Activated CD4-positive, alpha-beta memory T cell treated with anti-CD3 and anti-CD28 coated beads for 36 hours (primary cell): ENCODE measurements at regions of chr7 and their contacts with region 1.

Region 1: GRCh38 chr7:1137510-1138167 is 22.4 kb downstream of the ZFAND2A start:
- DNase-seq: no peak
- H3K4me3 Mint-ChIP-seq: peak overlapping the region; percentile 83
- H3K27ac Mint-ChIP-seq: peak overlapping the region; percentile 79
- H3K4me1 Mint-ChIP-seq: peaks cover 19% of the 10 kb centered on the region
- H3K27me3 Mint-ChIP-seq: no peaks in the 10 kb centered on the region

Region 2: GRCh38 chr7:1028031-1028770 is 109.4 kb before region 1 on chr7:
- CTCF ChIA-PET with region 1: no interaction called
- POLR2A ChIA-PET with region 1: no interaction called
- intact Hi-C with region 1: loop called (anchors 2 kb)
- DNase-seq: peak; percentile 92
- H3K4me3 Mint-ChIP-seq: peak overlapping the region; percentile 66
- H3K27ac Mint-ChIP-seq: peak overlapping the region; percentile 83
- H3K4me1 Mint-ChIP-seq: peaks cover 37% of the 10 kb centered on the region
- H3K27me3 Mint-ChIP-seq: no peaks in the 10 kb centered on the region

Region 3: DNA sequence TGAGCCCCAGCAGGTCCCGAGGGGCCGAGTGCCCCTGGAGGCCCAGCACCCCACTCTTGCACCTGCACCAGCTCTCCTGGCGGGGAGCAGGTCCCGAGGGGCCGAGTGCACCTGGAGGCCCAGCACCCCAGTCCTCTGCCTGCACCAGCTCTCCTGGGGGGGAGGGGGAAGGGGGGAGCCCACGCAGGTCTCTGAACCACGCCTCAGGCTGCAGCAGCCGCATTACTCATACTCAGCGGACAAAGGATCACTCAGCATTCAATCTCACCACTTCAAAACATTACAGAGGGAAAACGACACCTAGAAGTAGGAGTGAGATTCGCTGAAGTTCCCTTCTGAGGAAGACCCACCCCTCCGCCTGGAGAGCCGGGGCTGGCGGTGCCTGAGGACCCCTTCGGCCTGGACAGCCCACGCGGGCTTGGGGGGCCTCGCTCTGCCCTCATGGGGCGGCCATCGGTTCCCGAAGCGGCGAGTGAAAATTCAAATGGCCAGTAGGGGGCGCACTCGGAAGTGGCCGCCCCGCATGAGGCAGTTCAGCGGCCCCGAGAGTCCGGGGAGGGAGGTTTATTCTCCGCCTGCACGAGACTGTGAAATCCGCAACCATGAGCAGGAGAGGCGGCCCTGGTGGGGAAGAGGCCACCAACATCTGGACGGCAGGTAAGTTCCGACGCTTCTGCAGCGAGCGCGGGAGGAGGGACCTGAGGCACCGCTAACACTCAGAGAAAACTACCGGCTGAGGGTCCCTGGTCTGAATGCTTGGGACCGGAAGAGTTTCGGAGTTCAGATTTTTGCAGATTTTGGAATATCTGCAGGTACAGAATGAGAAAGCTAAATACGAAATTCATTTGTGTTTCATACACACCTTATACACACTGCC is 50.8 kb before region 1 on chr7:
- CTCF ChIA-PET with region 1: interaction called, 7 read pairs
- POLR2A ChIA-PET with region 1: no interaction called
- intact Hi-C with region 1: loop called (anchors 2 kb)
- DNase-seq: peak; percentile 81
- H3K4me3 Mint-ChIP-seq: peak overlapping the region; percentile 54
- H3K27ac Mint-ChIP-seq: no peak overlapping the region
- H3K4me1 Mint-ChIP-seq: peaks cover 14% of the 10 kb centered on the region
- H3K27me3 Mint-ChIP-seq: no peaks in the 10 kb centered on the region

Region 4: GRCh38 chr7:1159891-1160668 is 22.4 kb after region 1 on chr7 and contains the start of gene ZFAND2A:
- CTCF ChIA-PET with region 1: interaction called, 9 read pairs
- POLR2A ChIA-PET with region 1: interaction called, 10 read pairs
- intact Hi-C with region 1: loop called (anchors 1 kb)
- DNase-seq: peak; percentile 99
- H3K4me3 Mint-ChIP-seq: peak within 1 kb of the TSS; percentile 90
- H3K27ac Mint-ChIP-seq: peak within 1 kb of the TSS; percentile 87
- H3K4me1 Mint-ChIP-seq: peaks cover 25% of the 10 kb centered on the region
- H3K27me3 Mint-ChIP-seq: no peaks in the 10 kb centered on the region
- total RNA-seq, gene ZFAND2A: 24.1 to 27.5 TPM

Region 5: DNA sequence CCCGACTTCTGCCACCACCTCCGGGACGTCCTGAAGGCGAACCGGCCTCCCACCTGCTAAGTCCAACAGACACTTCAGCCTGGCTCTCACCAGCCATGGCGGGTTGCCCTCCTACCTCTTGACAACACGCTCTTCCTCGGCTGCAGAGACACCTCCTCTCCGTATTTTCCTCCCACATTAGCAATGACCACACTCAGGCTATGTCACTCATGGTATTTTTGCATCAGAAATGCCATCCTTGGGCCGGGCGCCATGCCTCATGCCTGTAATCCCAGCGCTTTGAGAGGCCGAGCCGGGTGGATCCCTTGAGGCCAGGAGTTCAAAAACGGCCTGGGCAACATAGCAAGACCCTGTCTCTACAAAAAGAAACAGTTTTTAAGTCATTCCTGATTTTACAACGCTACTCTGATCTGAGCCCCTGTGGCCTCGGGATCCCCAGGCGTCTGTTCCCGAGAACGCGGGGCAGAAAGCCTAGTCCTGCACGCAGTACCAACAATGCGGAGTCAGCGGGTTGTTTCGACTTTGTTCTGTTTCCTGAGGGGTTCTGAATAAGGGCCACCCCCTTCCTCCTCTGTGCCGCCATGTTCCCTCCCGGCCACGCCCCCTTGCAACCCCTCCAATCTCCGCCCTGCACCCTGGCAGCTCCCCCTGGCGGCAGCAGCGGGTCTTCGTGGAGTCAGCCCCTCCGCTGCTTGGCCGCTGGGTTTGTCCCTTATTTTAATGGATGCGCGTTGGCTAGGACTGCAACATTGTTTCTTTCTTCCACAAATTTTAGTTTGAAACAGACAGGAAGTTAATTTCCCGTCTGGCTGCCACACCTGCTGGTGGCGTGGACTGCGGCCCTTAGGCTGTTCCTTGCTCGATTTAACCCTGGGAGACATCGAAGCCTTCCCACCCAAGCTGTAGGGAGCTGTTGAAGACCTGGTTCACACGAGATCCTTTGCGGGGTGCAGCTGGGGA is 32.0 kb after region 1 on chr7:
- CTCF ChIA-PET with region 1: interaction called, 37 read pairs
- POLR2A ChIA-PET with region 1: no interaction called
- intact Hi-C with region 1: loop called (anchors 2 kb)
- DNase-seq: peak; percentile 98
- H3K4me3 Mint-ChIP-seq: peak overlapping the region; percentile 85
- H3K27ac Mint-ChIP-seq: peak overlapping the region; percentile 91
- H3K4me1 Mint-ChIP-seq: peaks cover 13% of the 10 kb centered on the region
- H3K27me3 Mint-ChIP-seq: no peaks in the 10 kb centered on the region

Region 6: DNA sequence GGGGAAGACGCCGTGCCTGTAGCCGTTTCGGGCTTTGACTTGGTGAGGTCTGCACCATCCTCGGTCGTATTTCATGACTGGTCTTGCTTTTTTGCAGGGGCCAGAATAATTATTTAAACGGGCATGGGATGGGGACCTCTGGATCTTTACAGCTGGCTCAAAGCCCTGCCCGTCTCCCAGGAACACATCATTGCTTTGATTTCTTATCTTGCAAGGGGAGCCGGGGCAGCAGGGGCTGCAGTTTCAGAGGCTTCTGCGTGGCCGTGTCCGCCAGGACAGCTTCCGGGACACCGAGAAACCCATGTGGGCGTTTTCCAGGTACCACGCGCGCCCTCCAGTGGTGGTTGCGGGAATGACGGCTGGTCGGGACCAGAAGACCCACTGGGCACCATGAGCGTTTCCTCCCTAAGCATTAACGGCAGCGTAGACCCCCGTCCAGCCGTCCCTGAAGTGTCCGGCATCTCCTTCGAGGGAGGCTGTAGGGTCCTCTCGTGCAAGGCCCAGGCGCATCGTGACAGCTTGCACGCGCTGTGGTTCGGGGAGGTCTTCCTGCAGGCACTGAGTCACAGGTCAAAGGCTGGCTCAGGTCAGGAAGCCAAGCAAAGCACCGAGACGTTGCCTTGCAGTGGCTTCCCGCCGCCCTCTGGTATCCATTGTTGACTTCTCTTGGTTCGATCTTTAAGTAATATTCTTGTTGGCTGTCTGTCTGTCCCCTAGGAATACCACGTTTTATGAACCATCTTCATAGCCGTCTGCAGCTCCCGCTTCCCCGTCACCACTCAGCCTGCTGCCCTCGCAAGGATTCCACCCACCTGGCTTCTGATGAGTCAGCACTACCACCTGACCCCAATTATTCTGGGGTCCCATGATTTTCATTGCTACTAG is 38.6 kb after region 1 on chr7:
- CTCF ChIA-PET with region 1: interaction called, 13 read pairs
- POLR2A ChIA-PET with region 1: no interaction called
- intact Hi-C with region 1: loop called (anchors 2 kb)
- DNase-seq: peak; percentile 91
- H3K4me3 Mint-ChIP-seq: peak overlapping the region; percentile 52
- H3K27ac Mint-ChIP-seq: peak overlapping the region; percentile 42
- H3K4me1 Mint-ChIP-seq: peaks cover 11% of the 10 kb centered on the region
- H3K27me3 Mint-ChIP-seq: peaks cover 14% of the 10 kb centered on the region

Region 7: GRCh38 chr7:1412322-1413261 is 275.0 kb after region 1 on chr7:
- CTCF ChIA-PET with region 1: no interaction called
- POLR2A ChIA-PET with region 1: no interaction called
- intact Hi-C with region 1: loop called (anchors 1 kb)
- DNase-seq: peak; percentile 92
- H3K4me3 Mint-ChIP-seq: no peak overlapping the region
- H3K27ac Mint-ChIP-seq: no peak overlapping the region
- H3K4me1 Mint-ChIP-seq: peaks cover 16% of the 10 kb centered on the region
- H3K27me3 Mint-ChIP-seq: peaks cover 6% of the 10 kb centered on the region